Endothelial cell of umbilical vein (primary cell): ENCODE measurements at regions of chr5 and their contacts with region 1.

Region 1: GRCh38 chr5:40904205-40904993 is 4.9 kb upstream of the C7 start:
- DNase-seq: peak; percentile 69
- H3K4me3 ChIP-seq: no peak overlapping the region
- H3K27ac ChIP-seq: no peak overlapping the region
- H3K4me1 ChIP-seq: no peaks in the 10 kb centered on the region
- H3K27me3 ChIP-seq: peaks cover 3 to 4% of the 10 kb centered on the region in 2 experiments
- CTCF ChIP-seq: peak; percentile 92 to 95
- POLR2A ChIP-seq: no peak

Region 2: DNA sequence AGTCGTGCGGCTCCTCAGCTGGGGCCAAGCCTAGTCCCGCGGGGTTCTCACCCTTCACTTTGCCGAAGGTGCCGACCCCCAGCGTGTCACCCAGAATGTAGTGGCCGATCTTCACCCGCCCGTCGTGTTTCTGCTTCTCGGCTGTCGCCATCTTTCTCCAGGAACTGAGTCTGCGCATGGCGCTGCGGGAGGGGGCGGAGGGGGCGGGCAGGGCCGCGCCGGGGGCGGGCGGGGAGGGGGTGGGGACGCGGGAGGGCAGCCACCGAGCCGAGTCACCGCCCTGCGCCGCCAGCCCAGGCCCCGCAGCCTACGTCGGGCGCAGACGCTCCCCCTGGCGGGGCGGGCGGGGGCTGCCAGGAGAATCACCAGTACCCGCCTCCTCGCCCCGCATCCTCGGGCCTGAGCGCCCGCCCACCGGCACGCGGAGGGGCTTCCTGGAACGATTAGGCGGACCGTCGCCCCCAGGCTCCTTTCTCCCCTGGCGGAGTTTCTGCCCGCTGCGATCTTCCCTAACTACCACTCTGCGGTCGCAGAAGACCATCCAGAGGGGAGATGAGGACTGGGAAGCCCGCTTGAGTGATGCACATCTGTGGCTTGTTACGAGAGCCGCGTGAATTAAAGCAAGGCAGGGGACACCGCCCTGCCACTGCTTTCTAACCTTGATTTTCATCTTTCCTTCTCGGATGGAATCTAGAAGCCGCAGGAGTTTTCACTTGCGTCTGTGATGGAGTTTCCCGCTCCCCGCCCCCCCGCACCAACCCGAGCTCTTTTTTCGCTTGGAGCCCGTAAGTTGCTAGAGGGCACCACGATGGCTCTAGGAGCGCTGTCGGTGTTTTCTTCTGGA is 106.2 kb before region 1 on chr5 and contains the start of gene PRKAA1:
- CTCF ChIA-PET with region 1: no interaction called
- POLR2A ChIA-PET with region 1: no interaction called
- dilution Hi-C with region 1: no loop called
- intact Hi-C with region 1: no loop called
- DNase-seq: peak; percentile 86
- H3K4me3 ChIP-seq: peak within 1 kb of the TSS; percentile 89 to 96 (median 94)
- H3K27ac ChIP-seq: peak within 1 kb of the TSS; percentile 93
- H3K4me1 ChIP-seq: peaks cover 19% of the 10 kb centered on the region
- H3K27me3 ChIP-seq: no peaks in the 10 kb centered on the region
- CTCF ChIP-seq: peak; percentile 42 to 74
- POLR2A ChIP-seq: peak; percentile 93
- total RNA-seq, gene PRKAA1: 83.5 and 97.2 TPM in 2 replicates

Region 3: GRCh38 chr5:40813698-40814281 is 90.6 kb before region 1 on chr5:
- CTCF ChIA-PET with region 1: no interaction called
- POLR2A ChIA-PET with region 1: no interaction called
- dilution Hi-C with region 1: no loop called
- intact Hi-C with region 1: no loop called
- DNase-seq: no peak
- H3K4me3 ChIP-seq: no peak overlapping the region
- H3K27ac ChIP-seq: no peak overlapping the region
- H3K4me1 ChIP-seq: no peaks in the 10 kb centered on the region
- H3K27me3 ChIP-seq: no peaks in the 10 kb centered on the region
- CTCF ChIP-seq: no peak
- POLR2A ChIP-seq: no peak

Region 4: GRCh38 chr5:40914835-40915234 is 10.4 kb after region 1 on chr5:
- CTCF ChIA-PET with region 1: interaction called, 20 read pairs
- POLR2A ChIA-PET with region 1: no interaction called
- dilution Hi-C with region 1: no loop called
- intact Hi-C with region 1: no loop called
- DNase-seq: no peak
- H3K4me3 ChIP-seq: no peak overlapping the region
- H3K27ac ChIP-seq: no peak overlapping the region
- H3K4me1 ChIP-seq: no peaks in the 10 kb centered on the region
- H3K27me3 ChIP-seq: no peaks in the 10 kb centered on the region
- CTCF ChIP-seq: no peak
- POLR2A ChIP-seq: no peak

Region 5: DNA sequence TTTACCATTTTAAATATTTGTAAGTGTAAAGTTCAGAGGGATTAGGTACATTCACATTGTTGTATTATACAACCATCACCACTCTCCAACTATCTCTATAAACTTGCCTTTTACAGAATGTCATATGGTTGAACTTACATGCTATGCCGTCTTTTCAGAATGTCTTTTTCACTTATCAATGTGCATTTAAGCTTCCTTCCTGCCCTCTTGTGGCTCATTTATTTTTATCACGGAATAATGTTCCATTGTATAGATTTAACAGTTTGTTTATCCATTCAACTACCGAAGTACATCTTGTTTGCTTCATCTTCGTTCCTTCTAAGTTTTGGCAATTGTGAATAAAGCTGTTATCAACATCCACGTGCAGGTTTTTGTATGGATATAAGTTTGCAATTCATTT is 442.2 kb after region 1 on chr5:
- CTCF ChIA-PET with region 1: interaction called, 3 read pairs
- POLR2A ChIA-PET with region 1: no interaction called
- dilution Hi-C with region 1: no loop called
- intact Hi-C with region 1: loop called (anchors 10 kb)
- DNase-seq: peak; percentile 3
- H3K4me3 ChIP-seq: no peak overlapping the region
- H3K27ac ChIP-seq: no peak overlapping the region
- H3K4me1 ChIP-seq: no peaks in the 10 kb centered on the region
- H3K27me3 ChIP-seq: no peaks in the 10 kb centered on the region
- CTCF ChIP-seq: no peak
- POLR2A ChIP-seq: no peak

Region 6: GRCh38 chr5:41641621-41642020 is 737.2 kb after region 1 on chr5:
- CTCF ChIA-PET with region 1: interaction called, 15 read pairs
- POLR2A ChIA-PET with region 1: no interaction called
- dilution Hi-C with region 1: no loop called
- intact Hi-C with region 1: loop called (anchors 2 kb)
- DNase-seq: no peak
- H3K4me3 ChIP-seq: no peak overlapping the region
- H3K27ac ChIP-seq: no peak overlapping the region
- H3K4me1 ChIP-seq: no peaks in the 10 kb centered on the region
- H3K27me3 ChIP-seq: no peaks in the 10 kb centered on the region
- CTCF ChIP-seq: no peak
- POLR2A ChIP-seq: no peak